K562 (cell line): ENCODE measurements at regions of chr6 and their contacts with region 1.

Region 1: GRCh38 chr6:156564127-156564806 is 212.9 kb upstream of the ARID1B start:
- DNase-seq: peak; percentile 84 to 90 (median 88)
- ATAC-seq: peak; percentile 100
- H3K4me3 ChIP-seq: no peak overlapping the region
- H3K27ac ChIP-seq: no peak overlapping the region
- H3K4me1 ChIP-seq: peaks cover 0 to 6% of the 10 kb centered on the region in 2 experiments; a peak in 1 of 5 replicates
- H3K27me3 ChIP-seq: peaks cover 8 to 35% of the 10 kb centered on the region in 2 experiments; a peak in 4 of 5 replicates
- CTCF ChIP-seq: peak; percentile 93 to 97 (median 95)
- EP300 ChIP-seq: no peak
- POLR2A ChIP-seq: no peak
- RAD21 ChIP-seq: peak; percentile 92 to 96

Region 2: DNA sequence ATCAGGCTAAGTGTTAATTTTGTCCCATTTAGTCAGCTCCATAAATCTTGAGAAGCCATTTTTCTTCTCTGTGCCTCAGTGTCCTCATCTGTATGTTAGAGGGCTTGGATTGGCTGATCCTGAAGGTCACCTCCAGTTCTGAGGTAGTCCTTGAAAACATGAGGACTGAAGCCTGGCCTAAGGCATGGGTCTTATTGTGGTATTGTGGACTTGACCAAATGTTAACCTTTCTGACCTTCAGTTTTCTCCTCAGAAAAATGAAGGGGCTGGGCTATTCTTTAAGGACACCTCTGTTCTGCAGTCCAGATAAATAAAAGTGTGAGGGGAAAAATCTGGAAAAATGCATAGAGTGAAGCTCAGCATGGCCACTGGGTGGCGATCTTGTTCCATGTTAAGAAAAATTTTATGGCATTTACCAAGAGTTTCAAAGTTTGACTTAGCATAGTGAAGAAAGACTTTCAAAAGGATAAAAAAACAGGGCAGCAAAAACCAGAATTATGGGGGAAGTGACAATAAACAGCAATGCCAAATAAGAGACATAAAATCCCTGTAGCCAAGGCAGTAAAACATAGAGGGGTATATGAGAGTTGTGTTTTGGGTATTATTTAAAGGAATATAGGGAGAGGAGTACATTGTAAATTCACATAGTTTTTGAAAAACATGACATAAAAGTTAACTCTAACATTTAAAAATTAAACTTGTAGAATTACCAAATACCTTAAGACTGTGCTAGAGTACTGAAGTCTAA is 1236.8 kb before region 1 on chr6:
- CTCF ChIA-PET with region 1: interaction called, 4 read pairs
- POLR2A ChIA-PET with region 1: no interaction called
- in situ Hi-C with region 1: no loop called
- intact Hi-C with region 1: loop called (anchors 1 kb)
- DNase-seq: peak; percentile 30 to 75 (median 46)
- ATAC-seq: peak; percentile 85
- H3K4me3 ChIP-seq: no peak overlapping the region
- H3K27ac ChIP-seq: no peak overlapping the region
- H3K4me1 ChIP-seq: no peaks in the 10 kb centered on the region; a peak in 1 of 5 replicates
- H3K27me3 ChIP-seq: peaks cover 2 to 5% of the 10 kb centered on the region in 2 experiments; a peak in 3 of 5 replicates
- CTCF ChIP-seq: peak; percentile 54 to 93 (median 79)
- EP300 ChIP-seq: no peak
- POLR2A ChIP-seq: no peak
- RAD21 ChIP-seq: peak; percentile 90 to 91

Region 3: GRCh38 chr6:156662025-156662445 is 97.8 kb after region 1 on chr6:
- CTCF ChIA-PET with region 1: interaction called, 7 read pairs
- POLR2A ChIA-PET with region 1: no interaction called
- in situ Hi-C with region 1: no loop called
- intact Hi-C with region 1: loop called (anchors 1 kb)
- DNase-seq: peak; percentile 86 to 88 (median 86)
- ATAC-seq: peak; percentile 99
- H3K4me3 ChIP-seq: 0 out of 2 replicates have a peak overlapping the region, but pooled peaks have one; percentile 6
- H3K27ac ChIP-seq: no peak overlapping the region
- H3K4me1 ChIP-seq: no peaks in the 10 kb centered on the region; a peak in 2 of 5 replicates
- H3K27me3 ChIP-seq: peaks cover 5 to 17% of the 10 kb centered on the region in 2 experiments; a peak in 4 of 5 replicates
- CTCF ChIP-seq: peak; percentile 93 to 97 (median 93)
- EP300 ChIP-seq: no peak
- POLR2A ChIP-seq: no peak
- RAD21 ChIP-seq: peak; percentile 69 to 86

Region 4: GRCh38 chr6:156776840-156777576 is 212.7 kb after region 1 on chr6 and contains the start of gene ARID1B:
- CTCF ChIA-PET with region 1: interaction called, 3 read pairs
- POLR2A ChIA-PET with region 1: no interaction called
- in situ Hi-C with region 1: no loop called
- intact Hi-C with region 1: loop called (anchors 5 kb)
- DNase-seq: peak; percentile 75 to 83 (median 80)
- ATAC-seq: peak; percentile 49
- H3K4me3 ChIP-seq: peak within 1 kb of the TSS; percentile 75
- H3K27ac ChIP-seq: peak within 1 kb of the TSS; percentile 95
- H3K4me1 ChIP-seq: peaks cover 8 to 15% of the 10 kb centered on the region in 2 experiments; a peak in 3 of 5 replicates
- H3K27me3 ChIP-seq: no peaks in the 10 kb centered on the region
- CTCF ChIP-seq: no peak
- EP300 ChIP-seq: no peak
- POLR2A ChIP-seq: peak; percentile 81
- RAD21 ChIP-seq: peak in 1 of 2 experiments; percentile 15; a peak in 1 of 4 replicates
- polyA plus RNA-seq, gene ARID1B: 12.5 to 25.8 TPM

Region 5: DNA sequence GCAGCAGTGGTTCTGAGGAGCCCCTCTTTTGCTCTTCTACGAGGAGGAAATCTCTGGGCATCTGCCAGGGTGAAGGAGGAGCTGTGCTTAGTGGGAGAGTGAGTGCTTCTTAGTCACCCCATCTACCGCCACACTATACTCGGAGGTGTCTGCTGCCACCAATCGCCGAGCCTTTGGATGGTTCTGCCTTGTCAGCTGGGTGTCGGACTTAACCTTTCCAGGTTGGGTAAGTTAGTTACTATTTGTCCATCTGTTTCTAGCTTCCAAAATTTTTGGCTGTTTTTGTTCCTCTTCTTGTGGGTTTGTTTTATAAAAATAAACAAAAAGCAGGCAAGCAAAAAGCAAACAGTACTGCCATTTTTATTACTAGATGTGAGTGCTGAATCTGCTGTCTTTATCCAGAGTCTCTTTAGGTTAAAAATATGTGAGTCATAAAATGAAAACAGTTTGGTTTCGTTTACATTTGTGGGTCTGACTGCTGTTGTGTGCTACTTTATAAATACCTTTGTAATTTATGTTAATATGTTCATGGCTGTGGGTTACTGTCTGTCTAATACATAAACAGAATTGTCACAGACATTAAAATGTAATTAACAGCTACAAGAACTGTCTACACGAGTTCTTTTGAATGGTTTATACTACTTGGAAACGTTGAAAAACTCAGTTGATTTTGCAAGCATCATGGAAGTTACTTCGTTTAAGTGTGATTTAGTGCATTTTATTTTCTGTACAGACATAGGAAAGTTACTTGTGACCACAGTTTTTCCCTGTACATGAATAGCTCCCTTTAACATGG is 302.2 kb after region 1 on chr6:
- CTCF ChIA-PET with region 1: no interaction called
- POLR2A ChIA-PET with region 1: no interaction called
- in situ Hi-C with region 1: no loop called
- intact Hi-C with region 1: loop called (anchors 10 kb)
- DNase-seq: peak in 1 of 4 experiments; percentile 34
- ATAC-seq: peak; percentile 63
- H3K4me3 ChIP-seq: no peak overlapping the region
- H3K27ac ChIP-seq: no peak overlapping the region
- H3K4me1 ChIP-seq: peaks cover 7 to 15% of the 10 kb centered on the region in 2 experiments; a peak in 3 of 5 replicates
- H3K27me3 ChIP-seq: no peaks in the 10 kb centered on the region
- CTCF ChIP-seq: peak in 1 of 3 experiments; percentile 33; a peak in 2 of 6 replicates
- EP300 ChIP-seq: no peak
- POLR2A ChIP-seq: no peak
- RAD21 ChIP-seq: peak; percentile 17 to 46; a peak in 2 of 4 replicates

Region 6: DNA sequence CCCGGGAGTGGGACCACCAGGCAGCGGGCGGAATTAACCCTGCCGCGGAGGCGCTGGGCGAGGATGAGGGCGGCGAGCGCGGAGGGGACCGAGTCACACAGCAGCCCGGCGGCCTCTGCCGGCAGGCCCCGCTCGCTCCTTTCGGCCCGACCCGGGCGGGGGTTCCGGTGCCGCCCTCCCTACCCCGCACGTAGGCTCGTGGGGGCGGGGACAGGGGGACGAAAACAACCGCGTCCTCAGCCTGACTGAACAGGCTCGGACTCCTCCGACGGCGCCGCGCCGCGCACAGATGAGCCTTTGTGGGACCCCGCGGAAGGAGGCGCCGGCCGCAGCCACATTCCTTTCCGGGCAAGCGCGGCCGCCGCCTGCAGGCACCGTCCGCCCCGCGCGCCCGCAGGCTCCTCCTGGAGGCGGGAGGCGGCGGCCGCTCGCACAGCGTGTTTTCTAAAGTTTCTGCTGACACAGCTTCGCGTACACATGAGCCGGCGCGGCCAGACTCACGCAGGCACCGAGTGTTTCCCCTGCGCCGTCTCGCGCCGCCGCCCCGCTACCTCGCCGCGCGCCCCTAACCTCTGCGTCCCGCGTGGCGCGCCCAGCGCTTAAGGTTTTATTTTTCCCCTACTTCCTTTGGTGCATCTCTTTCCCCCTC is 457.2 kb after region 1 on chr6:
- CTCF ChIA-PET with region 1: no interaction called
- POLR2A ChIA-PET with region 1: no interaction called
- in situ Hi-C with region 1: no loop called
- intact Hi-C with region 1: loop called (anchors 5 kb)
- DNase-seq: peak; percentile 87 to 93 (median 90)
- ATAC-seq: peak; percentile 92
- H3K4me3 ChIP-seq: peak overlapping the region; percentile 74
- H3K27ac ChIP-seq: peak overlapping the region; percentile 98
- H3K4me1 ChIP-seq: peaks cover 19 to 25% of the 10 kb centered on the region in 2 experiments
- H3K27me3 ChIP-seq: no peaks in the 10 kb centered on the region
- CTCF ChIP-seq: peak; percentile 52 to 73 (median 54); a peak in 5 of 6 replicates
- EP300 ChIP-seq: no peak
- POLR2A ChIP-seq: peak; percentile 96
- RAD21 ChIP-seq: peak; percentile 10 to 42

Region 7: DNA sequence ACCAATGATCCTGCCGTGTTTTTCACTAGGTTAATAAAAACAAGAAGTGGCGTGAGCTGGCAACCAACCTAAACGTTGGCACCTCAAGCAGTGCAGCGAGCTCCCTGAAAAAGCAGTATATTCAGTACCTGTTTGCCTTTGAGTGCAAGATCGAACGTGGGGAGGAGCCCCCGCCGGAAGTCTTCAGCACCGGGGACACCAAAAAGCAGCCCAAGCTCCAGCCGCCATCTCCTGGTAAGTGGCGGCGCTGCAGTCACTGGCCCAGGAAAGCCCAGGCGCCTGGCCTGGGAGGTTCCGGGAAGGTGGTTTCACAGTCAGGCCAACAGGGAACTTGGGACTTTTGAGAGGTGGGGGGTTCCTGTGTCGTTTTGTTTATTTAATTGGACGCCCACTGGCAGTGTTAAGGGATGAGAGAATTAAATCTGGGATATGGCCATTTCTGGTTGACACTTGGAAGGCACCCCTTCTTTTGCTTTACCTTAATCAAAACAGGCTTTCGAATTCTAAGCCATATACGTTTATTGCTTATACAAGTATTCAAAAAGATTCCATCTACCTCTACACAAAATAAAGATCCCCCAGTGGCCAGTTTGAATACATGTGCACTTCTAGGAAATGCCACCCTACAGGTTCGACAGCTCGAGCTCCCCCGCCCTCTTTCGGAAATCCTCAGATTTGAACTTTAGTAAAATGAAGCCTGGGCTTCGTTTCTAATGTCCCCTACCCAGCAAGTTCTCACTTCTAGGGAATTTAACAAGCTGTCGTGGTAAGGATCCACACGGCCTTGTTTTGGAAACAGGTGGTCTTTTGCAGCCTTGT is 620.1 kb after region 1 on chr6:
- CTCF ChIA-PET with region 1: interaction called, 4 read pairs
- POLR2A ChIA-PET with region 1: no interaction called
- in situ Hi-C with region 1: loop called (anchors 10 kb)
- intact Hi-C with region 1: loop called (anchors 1 kb)
- DNase-seq: peak; percentile 85 to 88 (median 88)
- ATAC-seq: peak; percentile 99
- H3K4me3 ChIP-seq: no peak overlapping the region
- H3K27ac ChIP-seq: no peak overlapping the region
- H3K4me1 ChIP-seq: peaks cover 0 to 6% of the 10 kb centered on the region in 2 experiments; a peak in 3 of 5 replicates
- H3K27me3 ChIP-seq: no peaks in the 10 kb centered on the region
- CTCF ChIP-seq: peak; percentile 96 to 97 (median 97)
- EP300 ChIP-seq: 0 out of 2 replicates have a peak, but pooled peaks have one; percentile 15
- POLR2A ChIP-seq: no peak
- RAD21 ChIP-seq: peak; percentile 90 to 94